ENCODE measurements at regions of chr1 and their contacts with region 1.

Region 1: DNA sequence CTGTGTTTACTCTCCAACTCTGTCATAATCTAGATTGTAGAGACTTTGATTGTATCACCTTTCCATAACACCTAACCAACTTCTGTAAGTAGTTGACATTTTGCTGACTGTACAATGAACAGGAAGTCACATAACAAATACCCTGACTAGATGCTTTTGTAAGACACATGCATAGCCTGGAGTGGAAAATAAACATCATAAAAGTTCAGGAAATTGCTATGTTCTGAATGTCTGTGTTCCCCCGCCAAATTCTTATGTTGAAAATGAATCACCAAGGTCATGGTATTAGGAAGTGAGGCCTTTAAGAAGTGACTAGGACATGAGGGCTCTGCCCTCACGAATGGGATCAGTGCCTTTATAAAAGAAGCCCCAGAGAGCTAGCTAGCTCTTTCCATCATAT is 40.4 kb upstream of the ZSWIM5 start:
- DNase-seq: peak; percentile 18
- H3K4me3 Mint-ChIP-seq: no peak overlapping the region
- H3K27ac Mint-ChIP-seq: peak overlapping the region; percentile 87
- H3K4me1 Mint-ChIP-seq: peaks cover 19% of the 10 kb centered on the region
- H3K27me3 Mint-ChIP-seq: no peaks in the 10 kb centered on the region

Region 2: DNA sequence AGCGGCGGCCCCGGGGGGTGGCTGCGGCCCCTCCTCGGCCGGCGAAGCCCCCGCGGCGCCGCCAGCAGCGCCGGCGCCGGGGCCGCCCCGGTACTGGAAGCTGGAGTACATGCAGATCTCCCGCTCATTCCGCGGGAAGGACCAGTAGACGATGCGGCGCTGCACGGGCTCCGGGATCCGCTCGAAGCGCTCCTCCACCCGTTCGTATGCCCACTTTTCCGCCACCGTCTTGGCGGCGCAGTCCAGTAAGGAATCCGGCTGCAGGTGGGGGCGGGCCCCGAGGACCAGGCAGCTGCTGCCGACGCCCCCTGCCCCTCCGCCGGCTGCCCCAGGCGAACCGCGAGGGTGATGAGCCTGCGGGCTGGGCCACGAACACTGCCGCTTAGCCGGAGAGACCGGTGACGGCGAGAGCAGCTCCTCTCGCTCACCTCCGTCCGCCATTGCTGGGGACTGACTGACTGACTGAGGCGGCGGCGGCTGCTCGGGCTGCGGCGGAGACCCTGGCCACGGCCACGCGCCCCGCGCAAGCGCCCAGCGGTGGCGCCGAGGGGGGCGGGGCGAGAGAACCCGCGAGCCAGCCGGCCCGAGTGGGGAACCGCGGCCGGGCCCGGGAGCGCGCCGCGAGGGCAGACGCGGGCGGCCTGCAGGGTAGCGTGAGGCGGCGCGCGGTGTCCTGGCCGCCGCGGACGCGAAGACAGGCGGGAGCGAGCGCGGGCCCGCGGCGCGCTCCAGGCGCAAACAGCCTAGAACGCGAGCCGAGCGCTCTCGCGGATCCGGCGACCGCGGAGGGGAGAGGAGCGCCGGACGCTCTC is 40.6 kb before region 1 on chr1 and contains the start of gene ZSWIM5:
- CTCF ChIA-PET with region 1: no interaction called
- intact Hi-C with region 1: loop called (anchors 2 kb)
- DNase-seq: peak; percentile 59
- H3K4me3 Mint-ChIP-seq: peak within 1 kb of the TSS; percentile 90
- H3K27ac Mint-ChIP-seq: peak within 1 kb of the TSS; percentile 72
- H3K4me1 Mint-ChIP-seq: peaks cover 33% of the 10 kb centered on the region
- H3K27me3 Mint-ChIP-seq: peaks cover 4% of the 10 kb centered on the region
- total RNA-seq, gene ZSWIM5: 0.15 to 0.26 TPM